BJ (cell line): ENCODE measurements at regions of chr13 and their contacts with region 1.

Region 1: DNA sequence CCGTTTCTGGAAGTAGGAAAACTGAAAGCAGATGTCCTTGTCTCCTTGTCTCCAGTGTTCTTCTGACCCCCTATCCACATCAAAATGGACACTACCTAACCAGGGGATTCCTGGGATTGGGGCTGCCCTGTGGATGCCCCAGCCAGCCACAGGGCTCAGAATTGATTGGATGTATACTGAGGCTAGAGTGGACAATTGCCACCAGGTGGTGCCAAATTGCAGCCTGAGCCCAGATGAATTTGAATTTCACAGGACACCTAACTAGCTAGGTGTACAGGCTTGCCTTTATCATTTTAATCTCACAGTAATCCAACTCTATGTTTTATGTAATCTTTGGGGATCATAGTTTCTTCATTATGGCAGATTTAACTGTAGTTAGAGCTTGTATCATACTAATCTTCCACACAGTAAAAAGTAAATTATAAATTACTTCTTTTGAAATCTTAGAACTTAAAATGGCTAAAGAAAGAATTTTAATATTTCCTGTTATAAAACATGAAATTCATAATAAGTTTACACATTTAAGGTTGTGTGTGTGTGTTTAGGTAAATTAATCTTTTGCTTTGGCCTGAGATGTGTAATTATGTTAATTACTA is 58.0 kb downstream of the PIBF1 start:
- DNase-seq: no peak
- H3K4me3 ChIP-seq: no peak overlapping the region
- H3K27me3 ChIP-seq: no peaks in the 10 kb centered on the region
- CTCF ChIP-seq: peak; percentile 74

Region 2: GRCh38 chr13:72823724-72824123 is 16.2 kb before region 1 on chr13:
- CTCF ChIA-PET with region 1: no interaction called
- POLR2A ChIA-PET with region 1: no interaction called
- DNase-seq: no peak
- H3K4me3 ChIP-seq: no peak overlapping the region
- H3K27me3 ChIP-seq: no peaks in the 10 kb centered on the region
- CTCF ChIP-seq: no peak

Region 3: DNA sequence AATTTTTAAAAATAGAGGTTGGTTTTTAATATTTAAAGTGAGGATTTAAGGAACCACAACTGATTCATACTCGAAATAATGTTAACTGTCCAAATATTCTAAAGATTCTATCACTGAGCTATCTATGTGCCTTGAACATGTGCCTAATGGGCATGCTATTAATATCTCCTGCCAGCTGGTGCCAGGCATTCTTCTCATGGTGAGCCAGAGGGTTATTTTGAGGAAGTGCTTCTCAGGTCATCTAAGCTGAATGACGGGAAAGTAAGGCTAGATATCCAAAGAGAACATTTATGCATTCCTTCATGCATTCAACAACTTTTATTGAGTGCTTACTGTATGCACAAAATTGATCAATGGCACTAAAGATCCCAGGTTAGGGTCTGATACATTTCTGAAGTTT is 80.2 kb after region 1 on chr13:
- CTCF ChIA-PET with region 1: interaction called, 3 read pairs
- POLR2A ChIA-PET with region 1: interaction called, 10 read pairs
- DNase-seq: no peak
- H3K4me3 ChIP-seq: no peak overlapping the region
- H3K27me3 ChIP-seq: no peaks in the 10 kb centered on the region
- CTCF ChIP-seq: no peak

Region 4: GRCh38 chr13:73708393-73708985 is 868.6 kb after region 1 on chr13:
- CTCF ChIA-PET with region 1: interaction called, 13 read pairs
- POLR2A ChIA-PET with region 1: no interaction called
- DNase-seq: peak; percentile 11
- H3K4me3 ChIP-seq: no peak overlapping the region
- H3K27me3 ChIP-seq: no peaks in the 10 kb centered on the region
- CTCF ChIP-seq: peak; percentile 82